H1 (cell line): ENCODE measurements at regions of chr16 and their contacts with region 1.

Region 1: GRCh38 chr16:67296422-67296821 is 17.1 kb downstream of the PLEKHG4 start:
- DNase-seq: no peak
- H3K4me3 ChIP-seq: no peak overlapping the region
- H3K27ac ChIP-seq: no peak overlapping the region
- H3K4me1 ChIP-seq: no peaks in the 10 kb centered on the region; a peak in 1 of 7 replicates
- H3K27me3 ChIP-seq: peaks cover 0 to 5% (median 2%) of the 10 kb centered on the region in 4 experiments; a peak in 4 of 7 replicates
- CTCF ChIP-seq: no peak
- EP300 ChIP-seq: no peak
- POLR2A ChIP-seq: no peak
- RAD21 ChIP-seq: no peak

Region 2: GRCh38 chr16:67279296-67280089 is 16.9 kb before region 1 on chr16 and contains the start of gene PLEKHG4:
- CTCF ChIA-PET with region 1: interaction called, 93 read pairs
- POLR2A ChIA-PET with region 1: interaction called, 8 read pairs
- DNase-seq: peak; percentile 27 to 83
- H3K4me3 ChIP-seq: peak within 1 kb of the TSS; percentile 37 to 70 (median 44)
- H3K27ac ChIP-seq: no peak within 1 kb of the TSS
- H3K4me1 ChIP-seq: 0 out of 7 replicates have a peak, but pooled peaks cover 0 to under 1% (median 0%) of the 10 kb centered on the region in 4 experiments
- H3K27me3 ChIP-seq: peaks cover 0 to 15% (median 12%) of the 10 kb centered on the region in 4 experiments; a peak in 5 of 7 replicates
- CTCF ChIP-seq: peak; percentile 78 to 98 (median 83)
- EP300 ChIP-seq: peak in 1 of 2 experiments; percentile 41; a peak in 1 of 3 replicates
- POLR2A ChIP-seq: no peak
- RAD21 ChIP-seq: peak; percentile 48 to 73
- total RNA-seq, gene PLEKHG4: 7.4 and 7.7 TPM in 2 replicates